Activated B cell treated with CpG ODN at 0.5 μM for 24 hours (primary cell): ENCODE measurements at regions of chr9 and their contacts with region 1.

Region 1: DNA sequence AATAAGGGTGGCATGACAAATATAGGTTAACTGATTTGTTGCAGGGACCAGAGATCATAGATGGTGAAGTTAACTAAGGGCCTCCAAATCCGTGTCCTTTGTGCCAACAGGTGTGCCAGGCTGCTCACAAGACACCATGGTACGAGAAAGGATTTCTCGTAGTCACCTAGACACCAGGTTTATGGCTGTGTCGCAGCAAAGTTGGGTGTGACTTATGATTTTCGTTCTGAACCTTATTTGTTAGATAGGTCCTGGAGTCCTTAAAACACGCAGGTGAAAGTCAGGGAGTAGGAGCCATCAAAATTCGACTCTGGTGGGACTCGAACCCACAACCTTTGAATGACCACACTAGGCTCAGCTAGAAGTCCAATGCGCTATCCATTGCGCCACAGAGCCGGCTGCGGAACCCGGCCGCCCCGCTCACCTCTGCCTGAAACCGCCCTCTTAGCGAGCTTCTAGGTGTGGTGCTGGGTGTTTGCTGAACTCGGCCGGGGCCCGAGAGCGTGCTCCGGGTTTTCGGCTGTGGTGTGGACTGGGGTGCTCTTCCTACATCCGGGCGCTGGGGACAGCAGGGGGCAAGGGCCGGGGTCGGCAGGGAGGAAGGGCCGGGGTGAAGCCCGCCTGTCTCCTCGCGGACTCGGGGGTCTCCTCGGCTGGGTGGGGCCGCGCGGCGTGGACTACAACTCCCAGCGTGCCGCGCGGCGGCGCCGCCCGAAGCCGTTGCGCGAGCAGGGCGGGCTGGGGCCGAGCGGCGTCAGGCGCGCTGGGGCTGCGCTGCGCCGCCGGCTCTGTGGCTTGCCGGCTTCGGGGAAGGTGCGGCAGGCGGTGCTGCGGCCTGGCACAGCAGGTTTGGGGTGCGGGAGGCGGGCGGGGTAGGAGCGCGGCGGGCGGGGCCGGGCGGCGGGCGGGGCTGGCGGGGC is at the start of gene SLC27A4:
- DNase-seq: peak; percentile 81
- ATAC-seq: peak; percentile 91
- H3K4me3 Mint-ChIP-seq: peak within 1 kb of the TSS; percentile 86
- H3K27ac Mint-ChIP-seq: peak within 1 kb of the TSS; percentile 80
- H3K4me1 Mint-ChIP-seq: peaks cover 10% of the 10 kb centered on the region
- H3K27me3 Mint-ChIP-seq: no peaks in the 10 kb centered on the region
- CTCF ChIP-seq: no peak
- total RNA-seq, gene SLC27A4: 13.6 and 14.4 TPM in 2 replicates

Region 2: DNA sequence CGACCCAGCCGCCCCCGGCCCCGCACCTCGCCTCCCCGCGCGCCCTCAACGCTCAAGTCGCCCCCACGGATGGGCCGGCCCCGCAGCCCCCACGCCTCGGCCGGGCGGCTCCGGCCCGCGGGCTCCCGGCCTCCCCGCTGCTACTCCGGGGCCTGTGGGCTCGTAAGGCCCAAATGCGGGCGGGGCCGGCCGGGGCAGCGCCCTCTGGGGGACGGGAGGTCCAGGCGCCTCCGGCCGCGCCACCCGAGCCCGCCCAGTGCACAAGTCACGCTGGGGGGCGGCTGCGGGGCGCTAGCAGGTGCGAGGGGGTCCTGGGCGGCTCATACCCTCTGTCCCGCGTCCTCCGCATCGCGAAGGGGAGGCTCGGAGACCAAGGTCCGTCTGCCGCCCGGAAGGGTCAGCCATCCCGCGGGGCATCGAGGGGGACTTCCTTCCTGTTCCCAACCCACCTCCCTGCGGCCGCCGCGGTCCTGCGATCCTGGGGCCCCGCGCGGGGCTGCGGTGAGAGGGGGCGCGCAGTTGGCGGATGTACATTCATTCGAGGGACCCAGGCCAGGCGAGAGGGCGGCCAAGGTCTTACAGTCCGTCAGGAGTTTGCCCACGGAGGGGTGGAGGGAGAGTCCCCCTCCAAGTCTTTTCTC is 148.5 kb before region 1 on chr9 and contains the start of gene CIZ1:
- CTCF ChIA-PET with region 1: interaction called, 4 read pairs
- POLR2A ChIA-PET with region 1: no interaction called
- intact Hi-C with region 1: loop called (anchors 2 kb)
- DNase-seq: peak; percentile 85
- ATAC-seq: peak; percentile 89
- H3K4me3 Mint-ChIP-seq: peak within 1 kb of the TSS; percentile 94
- H3K27ac Mint-ChIP-seq: peak within 1 kb of the TSS; percentile 92
- H3K4me1 Mint-ChIP-seq: peaks cover 25% of the 10 kb centered on the region
- H3K27me3 Mint-ChIP-seq: no peaks in the 10 kb centered on the region
- CTCF ChIP-seq: no peak
- total RNA-seq, gene CIZ1: 142 and 160 TPM in 2 replicates

Region 3: GRCh38 chr9:128203024-128203706 is 136.9 kb before region 1 on chr9 and contains the start of gene DNM1:
- CTCF ChIA-PET with region 1: no interaction called
- POLR2A ChIA-PET with region 1: no interaction called
- intact Hi-C with region 1: loop called (anchors 1 kb)
- DNase-seq: peak; percentile 78
- ATAC-seq: peak; percentile 98
- H3K4me3 Mint-ChIP-seq: peak within 1 kb of the TSS; percentile 85
- H3K27ac Mint-ChIP-seq: peak within 1 kb of the TSS; percentile 56
- H3K4me1 Mint-ChIP-seq: peaks cover 7% of the 10 kb centered on the region
- H3K27me3 Mint-ChIP-seq: peaks cover 18% of the 10 kb centered on the region
- CTCF ChIP-seq: peak; percentile 59
- total RNA-seq, gene DNM1: 0.81 and 0.86 TPM in 2 replicates

Region 4: GRCh38 chr9:128296337-128297220 is 43.5 kb before region 1 on chr9:
- CTCF ChIA-PET with region 1: interaction called, 9 read pairs
- POLR2A ChIA-PET with region 1: interaction called, 3 read pairs
- intact Hi-C with region 1: loop called (anchors 1 kb)
- DNase-seq: no peak
- ATAC-seq: no peak
- H3K4me3 Mint-ChIP-seq: no peak overlapping the region
- H3K27ac Mint-ChIP-seq: no peak overlapping the region
- H3K4me1 Mint-ChIP-seq: no peaks in the 10 kb centered on the region
- H3K27me3 Mint-ChIP-seq: no peaks in the 10 kb centered on the region
- CTCF ChIP-seq: no peak

Region 5: GRCh38 chr9:128370826-128371621 is 31.0 kb after region 1 on chr9 and contains the start of gene URM1:
- CTCF ChIA-PET with region 1: no interaction called
- POLR2A ChIA-PET with region 1: interaction called, 12 read pairs
- intact Hi-C with region 1: loop called (anchors 1 kb)
- DNase-seq: peak; percentile 96
- ATAC-seq: peak; percentile 91
- H3K4me3 Mint-ChIP-seq: peak within 1 kb of the TSS; percentile 97
- H3K27ac Mint-ChIP-seq: peak within 1 kb of the TSS; percentile 94
- H3K4me1 Mint-ChIP-seq: peaks cover 31% of the 10 kb centered on the region
- H3K27me3 Mint-ChIP-seq: no peaks in the 10 kb centered on the region
- CTCF ChIP-seq: no peak
- total RNA-seq, gene URM1: 55.8 and 65.1 TPM in 2 replicates